H1 (cell line): ENCODE measurements at regions of chr5 and their contacts with region 1.

Region 1: GRCh38 chr5:180470966-180471582 is 23.1 kb upstream of the CNOT6 start:
- DNase-seq: peak in 1 of 2 experiments; percentile 86
- H3K4me3 ChIP-seq: no peak overlapping the region
- H3K27ac ChIP-seq: no peak overlapping the region
- H3K4me1 ChIP-seq: no peaks in the 10 kb centered on the region
- H3K27me3 ChIP-seq: no peaks in the 10 kb centered on the region; a peak in 1 of 7 replicates
- CTCF ChIP-seq: peak in 2 of 3 experiments; percentile 88 to 93; a peak in 3 of 4 replicates
- EP300 ChIP-seq: no peak
- POLR2A ChIP-seq: no peak
- RAD21 ChIP-seq: peak; percentile 94 to 95

Region 2: GRCh38 chr5:180201051-180201987 is 269.8 kb before region 1 on chr5:
- CTCF ChIA-PET with region 1: interaction called, 13 read pairs
- POLR2A ChIA-PET with region 1: no interaction called
- DNase-seq: peak; percentile 29 to 88
- H3K4me3 ChIP-seq: no peak overlapping the region
- H3K27ac ChIP-seq: no peak overlapping the region
- H3K4me1 ChIP-seq: no peaks in the 10 kb centered on the region
- H3K27me3 ChIP-seq: no peaks in the 10 kb centered on the region
- CTCF ChIP-seq: peak; percentile 54 to 87 (median 84)
- EP300 ChIP-seq: no peak
- POLR2A ChIP-seq: no peak
- RAD21 ChIP-seq: peak; percentile 91 to 94

Region 3: DNA sequence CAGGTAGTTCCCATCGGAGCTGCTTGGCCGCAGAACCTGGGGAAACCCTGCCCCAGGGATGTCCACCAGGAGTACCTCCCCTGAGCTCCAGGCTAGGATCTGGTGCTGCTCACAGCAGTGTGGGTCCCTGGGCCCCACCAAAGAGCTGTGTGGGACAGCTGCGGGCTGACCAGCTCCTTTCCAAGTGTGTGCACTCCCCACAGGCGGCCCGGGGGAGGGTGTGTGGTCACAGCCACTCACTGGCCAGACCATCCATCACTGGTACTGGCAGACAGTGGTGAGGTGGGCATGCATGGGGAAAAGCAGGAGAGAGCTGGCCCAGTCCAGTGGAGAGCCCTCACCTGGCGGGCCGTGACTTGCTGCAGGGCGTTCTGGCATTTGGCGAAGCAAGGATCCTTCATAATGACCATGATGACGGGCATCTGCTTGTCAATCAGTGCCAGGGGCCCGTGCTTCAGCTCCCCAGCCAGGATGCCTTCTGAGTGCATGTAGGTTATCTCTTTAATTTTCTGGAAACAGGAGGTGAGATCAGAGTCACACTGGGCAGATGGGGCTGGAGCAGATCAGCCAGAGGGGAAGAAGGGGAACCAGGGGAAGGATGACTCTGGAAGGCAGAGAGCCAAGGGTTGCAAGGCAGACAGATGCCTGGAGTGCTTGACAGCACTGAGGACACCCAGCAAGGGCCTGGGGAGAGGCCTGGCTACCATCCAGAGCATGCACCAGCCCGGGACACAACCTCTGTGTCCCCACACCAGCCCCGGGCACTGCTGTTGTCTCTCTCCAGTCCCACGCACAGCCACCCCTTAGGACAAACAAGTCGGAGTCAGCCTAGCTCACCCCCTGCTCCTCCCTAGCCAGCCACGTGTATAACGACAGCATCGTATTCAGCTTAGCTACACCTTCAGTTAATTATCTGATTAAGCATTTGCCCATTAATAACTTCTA is 166.4 kb before region 1 on chr5:
- CTCF ChIA-PET with region 1: interaction called, 11 read pairs
- POLR2A ChIA-PET with region 1: no interaction called
- DNase-seq: no peak
- H3K4me3 ChIP-seq: no peak overlapping the region
- H3K27ac ChIP-seq: no peak overlapping the region
- H3K4me1 ChIP-seq: no peaks in the 10 kb centered on the region
- H3K27me3 ChIP-seq: no peaks in the 10 kb centered on the region
- CTCF ChIP-seq: no peak
- EP300 ChIP-seq: no peak
- POLR2A ChIP-seq: peak in 1 of 2 experiments; percentile 16; a peak in 1 of 3 replicates
- RAD21 ChIP-seq: no peak

Region 4: DNA sequence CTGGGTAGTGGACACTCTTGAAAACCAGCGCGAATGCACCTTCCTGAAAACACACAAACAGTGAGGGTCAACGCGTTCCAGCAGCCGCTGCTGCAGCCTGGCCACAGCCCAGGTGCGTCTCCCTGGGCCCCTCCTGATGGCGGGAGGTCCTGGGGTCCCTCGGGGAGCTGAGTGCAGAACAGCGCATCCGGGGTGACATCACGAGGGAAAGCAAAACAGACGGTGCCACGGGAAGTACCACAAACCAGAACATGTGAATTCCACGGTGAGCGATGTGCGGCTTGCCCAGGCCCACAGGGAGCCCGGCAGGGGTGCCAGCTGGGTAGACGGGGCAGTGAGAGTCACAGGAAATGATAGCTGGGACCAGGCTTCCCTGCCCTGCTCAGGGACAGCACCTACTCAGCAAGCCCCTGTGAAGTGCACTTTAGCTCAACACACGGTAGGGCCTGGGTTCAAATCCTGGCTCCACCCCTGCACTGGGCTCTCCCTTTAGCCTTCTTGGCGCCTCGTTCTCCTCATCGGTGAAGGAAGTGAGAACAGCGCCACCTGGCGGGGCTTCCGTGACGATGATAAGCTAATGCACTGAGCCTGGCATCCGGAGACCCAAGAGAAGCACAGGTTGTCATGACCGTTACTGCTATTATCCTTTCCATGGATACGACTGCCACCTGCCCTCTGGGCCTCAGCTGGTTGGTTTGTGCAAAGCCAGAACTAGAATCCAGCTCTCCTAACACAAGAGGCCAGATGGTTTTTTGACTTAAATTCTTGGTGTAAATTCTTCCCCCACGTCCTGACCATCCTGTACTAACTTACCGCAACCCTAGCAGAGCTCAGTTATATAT is 142.6 kb before region 1 on chr5:
- CTCF ChIA-PET with region 1: interaction called, 51 read pairs
- POLR2A ChIA-PET with region 1: interaction called, 6 read pairs
- DNase-seq: peak; percentile 68 to 90
- H3K4me3 ChIP-seq: no peak overlapping the region
- H3K27ac ChIP-seq: no peak overlapping the region
- H3K4me1 ChIP-seq: peaks cover 12 to 16% (median 13%) of the 10 kb centered on the region in 4 experiments
- H3K27me3 ChIP-seq: no peaks in the 10 kb centered on the region
- CTCF ChIP-seq: peak in 2 of 3 experiments; percentile 77 to 91; a peak in 3 of 4 replicates
- EP300 ChIP-seq: no peak
- POLR2A ChIP-seq: peak in 1 of 2 experiments; percentile 51; a peak in 2 of 3 replicates
- RAD21 ChIP-seq: peak; percentile 47 to 70

Region 5: DNA sequence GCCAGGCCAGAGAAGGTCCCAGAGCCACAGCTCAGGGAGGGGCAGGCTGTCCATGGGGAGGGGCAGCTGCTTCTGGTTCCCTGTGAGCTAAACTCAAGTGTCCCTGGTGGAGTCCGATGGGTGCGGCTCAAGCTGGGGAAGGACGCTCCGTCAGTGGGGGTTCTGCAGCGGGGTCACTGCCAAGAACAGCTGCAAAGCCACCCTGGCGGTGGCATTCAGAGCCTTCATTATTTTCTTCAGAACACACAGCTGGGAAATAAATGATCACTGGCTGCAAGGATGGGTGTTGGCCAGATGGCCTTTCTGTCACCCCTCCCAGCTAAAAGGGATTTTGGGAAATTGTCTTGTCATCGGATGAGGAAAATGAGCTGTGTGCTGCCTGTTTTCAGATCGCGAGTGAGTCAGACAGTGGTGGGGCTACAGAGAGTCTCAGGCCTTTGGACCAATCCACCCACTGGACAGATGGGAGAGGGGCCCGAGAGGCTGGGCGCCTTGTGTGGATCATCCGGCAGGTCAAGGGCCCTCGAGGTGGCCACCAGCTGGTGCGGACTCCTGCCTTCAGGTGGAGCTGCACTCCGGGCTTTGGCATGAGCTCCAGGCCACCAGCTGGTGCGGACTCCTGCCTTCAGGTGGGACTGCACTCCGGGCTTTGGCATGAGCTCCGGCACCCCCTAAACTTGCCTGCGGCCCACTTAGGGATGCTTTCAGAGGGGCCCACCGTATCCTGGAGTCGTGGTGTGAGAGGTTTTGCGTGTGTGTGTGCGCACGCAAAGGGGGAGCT is 100.0 kb before region 1 on chr5:
- CTCF ChIA-PET with region 1: interaction called, 12 read pairs
- POLR2A ChIA-PET with region 1: interaction called, 3 read pairs
- DNase-seq: no peak
- H3K4me3 ChIP-seq: no peak overlapping the region
- H3K27ac ChIP-seq: no peak overlapping the region
- H3K4me1 ChIP-seq: no peaks in the 10 kb centered on the region; a peak in 2 of 7 replicates
- H3K27me3 ChIP-seq: no peaks in the 10 kb centered on the region; a peak in 1 of 7 replicates
- CTCF ChIP-seq: peak in 1 of 3 experiments; percentile 32; a peak in 1 of 4 replicates
- EP300 ChIP-seq: no peak
- POLR2A ChIP-seq: no peak
- RAD21 ChIP-seq: peak; percentile 25 to 47; a peak in 3 of 4 replicates

Region 6: GRCh38 chr5:180460834-180461233 is 10.2 kb before region 1 on chr5:
- CTCF ChIA-PET with region 1: interaction called, 33 read pairs
- POLR2A ChIA-PET with region 1: no interaction called
- DNase-seq: no peak
- H3K4me3 ChIP-seq: no peak overlapping the region
- H3K27ac ChIP-seq: no peak overlapping the region
- H3K4me1 ChIP-seq: no peaks in the 10 kb centered on the region
- H3K27me3 ChIP-seq: no peaks in the 10 kb centered on the region
- CTCF ChIP-seq: no peak
- EP300 ChIP-seq: no peak
- POLR2A ChIP-seq: no peak
- RAD21 ChIP-seq: no peak

Region 7: GRCh38 chr5:180553530-180553929 is 82.5 kb after region 1 on chr5:
- CTCF ChIA-PET with region 1: no interaction called
- POLR2A ChIA-PET with region 1: no interaction called
- DNase-seq: no peak
- H3K4me3 ChIP-seq: no peak overlapping the region
- H3K27ac ChIP-seq: no peak overlapping the region
- H3K4me1 ChIP-seq: no peaks in the 10 kb centered on the region; a peak in 1 of 7 replicates
- H3K27me3 ChIP-seq: no peaks in the 10 kb centered on the region
- CTCF ChIP-seq: no peak
- EP300 ChIP-seq: no peak
- POLR2A ChIP-seq: no peak
- RAD21 ChIP-seq: no peak